Brain microvascular endothelial cell (primary cell): ENCODE measurements at regions of chr1 and their contacts with region 1.

Region 1: GRCh38 chr1:53739109-53739681 is at the start of gene GLIS1:
- DNase-seq: peak; percentile 76
- H3K4me3 ChIP-seq: peak within 1 kb of the TSS; percentile 95
- H3K27ac ChIP-seq: peak within 1 kb of the TSS; percentile 100
- H3K27me3 ChIP-seq: no peaks in the 10 kb centered on the region
- CTCF ChIP-seq: no peak

Region 2: DNA sequence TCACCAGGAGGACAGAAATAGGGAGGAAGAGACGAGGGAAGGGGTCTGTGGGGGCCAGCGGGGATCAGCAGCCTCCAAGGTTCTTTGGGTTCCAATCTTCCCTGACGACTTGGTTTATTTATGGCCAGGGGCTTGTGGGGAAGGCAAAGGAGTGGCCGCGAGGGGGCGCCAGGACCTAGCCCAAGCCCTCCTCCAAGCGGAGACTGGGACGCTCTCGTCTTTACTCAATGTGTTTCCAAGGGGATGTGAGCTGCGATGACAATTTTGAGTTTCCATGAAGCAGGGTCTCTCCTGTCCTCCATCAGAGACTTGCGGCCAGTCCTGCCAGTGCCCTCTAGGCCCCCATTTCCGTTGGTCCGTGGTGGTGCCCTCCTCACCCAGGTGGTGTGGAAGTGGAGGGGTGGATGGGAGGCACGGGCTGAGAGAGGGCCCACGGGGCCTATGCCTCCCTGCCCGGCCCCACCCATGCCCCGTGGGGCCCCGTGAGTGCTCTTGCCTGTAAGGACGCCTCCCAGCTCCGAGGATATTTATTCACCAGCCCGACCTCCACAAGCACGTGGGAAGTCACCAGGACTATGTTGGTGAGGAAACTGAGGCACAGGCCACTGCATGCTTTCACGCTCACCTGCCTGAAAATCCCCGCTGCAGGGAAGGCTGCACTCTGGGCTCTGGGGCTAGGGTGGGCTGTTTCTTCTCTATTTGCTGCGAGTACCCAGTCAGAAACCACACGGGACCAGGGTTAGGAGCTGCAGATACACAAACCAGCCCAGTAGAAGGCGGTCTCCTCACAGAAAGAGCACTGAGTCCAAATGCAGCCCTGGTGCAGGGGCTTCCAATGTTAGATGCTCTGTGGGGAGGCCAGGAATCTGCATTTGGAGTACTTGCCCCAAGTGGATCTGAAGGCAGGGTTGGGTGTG is 253.5 kb before region 1 on chr1:
- in situ Hi-C with region 1: loop called (anchors 10 kb)
- DNase-seq: peak; percentile 80
- H3K4me3 ChIP-seq: no peak overlapping the region
- H3K27ac ChIP-seq: no peak overlapping the region
- H3K27me3 ChIP-seq: peaks cover 13% of the 10 kb centered on the region
- CTCF ChIP-seq: peak; percentile 94

Region 3: GRCh38 chr1:54180701-54181360 is 441.6 kb after region 1 on chr1:
- in situ Hi-C with region 1: no loop called
- DNase-seq: no peak
- H3K4me3 ChIP-seq: no peak overlapping the region
- H3K27ac ChIP-seq: no peak overlapping the region
- H3K27me3 ChIP-seq: no peaks in the 10 kb centered on the region
- CTCF ChIP-seq: no peak